Activated CD4-positive, alpha-beta T cell treated with anti-CD3 and anti-CD28 coated beads, Interleukin-2, amount 10 ng/mL, durations not matched to agents 24 days and 14 days (primary cell): ENCODE measurements at regions of chr6 and their contacts with region 1.

Region 1: GRCh38 chr6:89080542-89081422 is at the start of gene PNRC1:
- DNase-seq: peak; percentile 100
- H3K4me3 Mint-ChIP-seq: peak within 1 kb of the TSS; percentile 89
- H3K27ac Mint-ChIP-seq: peak within 1 kb of the TSS; percentile 98
- H3K4me1 Mint-ChIP-seq: peaks cover 26% of the 10 kb centered on the region
- H3K27me3 Mint-ChIP-seq: no peaks in the 10 kb centered on the region
- total RNA-seq, gene PNRC1: 48.3 and 51.2 TPM in 2 replicates

Region 2: GRCh38 chr6:87154993-87155841 is 1925.6 kb before region 1 on chr6 and contains the start of gene ZNF292:
- intact Hi-C with region 1: loop called (anchors 10 kb)
- DNase-seq: peak; percentile 99
- H3K4me3 Mint-ChIP-seq: peak within 1 kb of the TSS; percentile 88
- H3K27ac Mint-ChIP-seq: peak within 1 kb of the TSS; percentile 95
- H3K4me1 Mint-ChIP-seq: peaks cover 48% of the 10 kb centered on the region
- H3K27me3 Mint-ChIP-seq: peaks cover 2% of the 10 kb centered on the region
- total RNA-seq, gene ZNF292: 61.2 and 63.7 TPM in 2 replicates

Region 3: DNA sequence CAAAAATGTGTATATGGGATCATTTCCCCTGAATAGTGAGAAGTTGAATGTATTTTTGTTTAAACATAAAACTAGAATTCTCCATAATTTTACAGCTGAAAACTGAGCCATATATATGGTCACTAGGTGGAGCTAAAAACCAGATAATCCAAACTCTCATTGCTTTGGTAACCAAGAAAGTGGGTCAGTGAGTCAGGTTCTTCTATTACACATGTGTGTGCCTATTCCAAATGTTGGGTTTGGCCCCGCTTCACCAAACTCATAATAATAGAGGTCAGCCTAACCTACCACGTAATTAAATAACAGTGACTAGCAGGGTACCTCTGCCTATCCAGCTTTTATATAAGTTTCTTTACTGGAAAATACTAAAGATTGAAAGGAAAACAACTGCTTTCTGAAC is 98.1 kb before region 1 on chr6:
- intact Hi-C with region 1: loop called (anchors 2 kb)
- DNase-seq: peak; percentile 71
- H3K4me3 Mint-ChIP-seq: no peak overlapping the region
- H3K27ac Mint-ChIP-seq: no peak overlapping the region
- H3K4me1 Mint-ChIP-seq: no peaks in the 10 kb centered on the region
- H3K27me3 Mint-ChIP-seq: peaks cover 12% of the 10 kb centered on the region

Region 4: DNA sequence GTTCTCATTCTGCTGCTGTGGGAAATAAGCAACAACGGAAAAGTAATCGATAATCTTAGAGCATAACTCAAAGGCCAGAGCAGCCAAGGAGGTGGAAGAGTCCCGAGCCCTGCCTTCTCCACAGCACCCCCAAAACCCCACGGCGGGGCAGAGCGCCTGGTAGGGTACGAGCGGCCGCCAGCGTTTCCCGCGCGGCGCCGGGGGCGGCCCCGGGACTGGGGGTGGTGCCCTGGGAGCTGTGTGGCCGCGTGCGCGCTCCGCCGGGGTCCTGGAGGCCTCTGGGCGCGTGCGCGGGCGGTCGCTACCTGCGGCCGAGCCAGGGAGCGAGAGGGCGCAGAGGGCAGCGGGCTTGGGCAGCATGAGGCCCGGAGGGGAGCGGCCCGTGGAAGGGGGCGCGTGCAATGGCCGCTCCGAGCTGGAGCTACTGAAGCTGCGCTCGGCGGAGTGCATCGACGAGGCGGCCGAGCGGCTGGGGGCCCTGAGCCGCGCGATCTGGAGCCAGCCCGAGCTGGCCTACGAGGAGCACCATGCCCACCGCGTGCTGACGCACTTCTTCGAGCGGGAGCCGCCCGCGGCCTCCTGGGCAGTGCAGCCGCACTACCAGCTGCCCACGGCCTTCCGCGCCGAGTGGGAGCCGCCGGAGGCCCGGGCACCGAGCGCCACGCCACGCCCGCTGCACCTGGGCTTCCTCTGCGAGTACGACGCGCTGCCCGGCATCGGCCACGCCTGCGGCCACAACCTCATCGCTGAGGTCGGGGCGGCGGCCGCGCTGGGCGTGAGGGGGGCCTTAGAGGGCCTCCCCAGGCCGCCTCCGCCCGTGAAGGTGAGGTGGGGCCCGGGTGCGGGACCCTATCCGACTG is 65.2 kb after region 1 on chr6 and contains the start of gene PM20D2:
- intact Hi-C with region 1: loop called (anchors 1 kb)
- DNase-seq: peak; percentile 90
- H3K4me3 Mint-ChIP-seq: peak within 1 kb of the TSS; percentile 91
- H3K27ac Mint-ChIP-seq: peak within 1 kb of the TSS; percentile 98
- H3K4me1 Mint-ChIP-seq: peaks cover 26% of the 10 kb centered on the region
- H3K27me3 Mint-ChIP-seq: peaks cover 12% of the 10 kb centered on the region
- total RNA-seq, gene PM20D2: 18.3 and 18.9 TPM in 2 replicates

Region 5: GRCh38 chr6:89412071-89413005 is 331.6 kb after region 1 on chr6 and contains the start of gene RRAGD:
- intact Hi-C with region 1: loop called (anchors 1 kb)
- DNase-seq: peak; percentile 89
- H3K4me3 Mint-ChIP-seq: peak within 1 kb of the TSS; percentile 97
- H3K27ac Mint-ChIP-seq: peak within 1 kb of the TSS; percentile 95
- H3K4me1 Mint-ChIP-seq: peaks cover 17% of the 10 kb centered on the region
- H3K27me3 Mint-ChIP-seq: peaks cover 51% of the 10 kb centered on the region
- total RNA-seq, gene RRAGD: 10.6 and 10.9 TPM in 2 replicates

Region 6: GRCh38 chr6:90586836-90587638 is 1506.3 kb after region 1 on chr6 and contains the start of gene MAP3K7:
- intact Hi-C with region 1: loop called (anchors 5 kb)
- DNase-seq: peak; percentile 99
- H3K4me3 Mint-ChIP-seq: peak within 1 kb of the TSS; percentile 92
- H3K27ac Mint-ChIP-seq: peak within 1 kb of the TSS; percentile 98
- H3K4me1 Mint-ChIP-seq: peaks cover 37% of the 10 kb centered on the region
- H3K27me3 Mint-ChIP-seq: peaks cover 26% of the 10 kb centered on the region
- total RNA-seq, gene MAP3K7: 31.8 TPM in 2 replicates